Heart right ventricle (tissue), 16 donors: ENCODE measurements at regions of chr17 and their contacts with region 1.

Region 1: DNA sequence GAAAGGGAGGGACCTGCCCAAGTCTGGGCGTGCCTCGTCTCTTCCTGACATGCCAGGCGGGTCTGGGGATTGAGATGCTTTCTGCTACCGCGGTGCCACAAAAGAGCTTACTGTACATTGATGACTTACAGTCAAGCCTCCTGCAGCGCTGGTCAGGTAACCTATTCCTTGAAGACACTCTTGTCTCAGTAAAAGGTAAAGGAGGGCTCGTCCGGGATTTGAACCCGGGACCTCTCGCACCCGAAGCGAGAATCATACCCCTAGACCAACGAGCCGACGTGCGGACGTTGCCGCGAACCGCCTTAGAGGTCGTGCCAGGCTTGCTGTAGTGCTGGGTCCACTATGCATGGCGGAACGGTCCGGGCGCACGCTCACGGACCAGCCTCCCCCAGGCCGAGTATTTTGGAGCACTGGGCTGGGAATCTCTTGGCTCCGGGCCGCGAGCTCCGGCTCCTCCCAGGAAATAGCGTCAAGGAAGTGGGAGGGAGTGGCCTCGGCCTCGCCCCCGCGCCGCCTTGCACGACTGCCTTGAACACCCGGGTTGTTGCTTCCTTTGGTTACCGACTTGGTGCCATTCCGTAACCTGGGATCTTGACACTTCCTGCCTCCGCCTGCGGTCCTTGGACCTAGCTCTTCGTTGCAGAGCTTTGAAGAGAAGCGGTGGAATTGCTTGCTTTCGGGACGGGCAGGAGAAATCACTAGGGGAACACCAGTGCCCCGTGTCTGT is 12.4 kb upstream of the AURKB start:
- DNase-seq: peak; percentile 95
- ATAC-seq: peak; percentile 72 to 85 (median 79)
- H3K4me3 ChIP-seq: peak overlapping the region; percentile 45 to 92 (median 66)
- H3K27ac ChIP-seq: peak overlapping the region; percentile 94 to 99 (median 97)
- H3K4me1 ChIP-seq: peaks cover 7 to 68% (median 18%) of the 10 kb centered on the region in 9 donors
- H3K27me3 ChIP-seq: no peaks in the 10 kb centered on the region
- CTCF ChIP-seq: no peak

Region 2: GRCh38 chr17:8105957-8106398 is 116.8 kb before region 1 on chr17:
- intact Hi-C with region 1: no loop called
- DNase-seq: no peak
- ATAC-seq: no peak
- H3K4me3 ChIP-seq: no peak overlapping the region
- H3K27ac ChIP-seq: no peak overlapping the region
- H3K4me1 ChIP-seq: peaks cover 0 to 14% (median 7%) of the 10 kb centered on the region in 9 donors
- H3K27me3 ChIP-seq: peaks cover 10 to 30% (median 26%) of the 10 kb centered on the region in 7 donors
- CTCF ChIP-seq: no peak

Region 3: GRCh38 chr17:8125157-8125946 is 97.4 kb before region 1 on chr17:
- intact Hi-C with region 1: loop called in 2 of 10 experiments (anchors 5 to 10 kb)
- DNase-seq: peak; percentile 76 to 86
- ATAC-seq: peak; percentile 30 to 71 (median 60)
- H3K4me3 ChIP-seq: peak overlapping the region; percentile 40 to 91 (median 70)
- H3K27ac ChIP-seq: peak overlapping the region in 8 of 10 donors; percentile 51 to 82 (median 67)
- H3K4me1 ChIP-seq: peaks cover 27 to 70% (median 67%) of the 10 kb centered on the region in 9 donors
- H3K27me3 ChIP-seq: peaks cover 0 to 94% (median 17%) of the 10 kb centered on the region in 7 donors
- CTCF ChIP-seq: no peak

Region 4: GRCh38 chr17:8294814-8295316 is 72.1 kb after region 1 on chr17:
- intact Hi-C with region 1: loop called in 3 of 10 experiments (anchors 2 to 10 kb)
- DNase-seq: no peak
- ATAC-seq: peak; percentile 1 to 27 (median 6)
- H3K4me3 ChIP-seq: peak overlapping the region; percentile 10 to 87 (median 65)
- H3K27ac ChIP-seq: peak overlapping the region; percentile 81 to 99 (median 89)
- H3K4me1 ChIP-seq: peaks cover 8 to 27% (median 13%) of the 10 kb centered on the region in 9 donors
- H3K27me3 ChIP-seq: no peaks in the 10 kb centered on the region
- CTCF ChIP-seq: no peak

Region 5: GRCh38 chr17:8376271-8377067 is 153.7 kb after region 1 on chr17 and contains the start of gene KRABD2:
- intact Hi-C with region 1: loop called in 1 of 10 experiments (anchors 10 kb)
- DNase-seq: peak; percentile 92 to 95
- ATAC-seq: peak; percentile 95 to 98 (median 97)
- H3K4me3 ChIP-seq: peak within 1 kb of the TSS; percentile 47 to 89 (median 76)
- H3K27ac ChIP-seq: peak within 1 kb of the TSS; percentile 89 to 97 (median 94)
- H3K4me1 ChIP-seq: peaks cover 4 to 63% (median 46%) of the 10 kb centered on the region in 9 donors
- H3K27me3 ChIP-seq: no peaks in the 10 kb centered on the region
- CTCF ChIP-seq: peak; percentile 11 to 71 (median 62)